Activated B cell treated with CpG ODN at 0.5 μM for 24 hours (primary cell): ENCODE measurements at regions of chr9 and their contacts with region 1.

Region 1: GRCh38 chr9:136728080-136728547 is 14.6 kb downstream of the LCN10 start:
- DNase-seq: peak; percentile 97
- ATAC-seq: peak; percentile 80
- H3K4me3 Mint-ChIP-seq: peak overlapping the region; percentile 95
- H3K27ac Mint-ChIP-seq: peak overlapping the region; percentile 66
- H3K4me1 Mint-ChIP-seq: peaks cover 39% of the 10 kb centered on the region
- H3K27me3 Mint-ChIP-seq: no peaks in the 10 kb centered on the region
- CTCF ChIP-seq: peak; percentile 51

Region 2: GRCh38 chr9:136539427-136540421 is 188.4 kb before region 1 on chr9:
- CTCF ChIA-PET with region 1: no interaction called
- POLR2A ChIA-PET with region 1: interaction called, 13 read pairs
- intact Hi-C with region 1: no loop called
- DNase-seq: peak; percentile 66
- ATAC-seq: peak; percentile 72
- H3K4me3 Mint-ChIP-seq: peak overlapping the region; percentile 76
- H3K27ac Mint-ChIP-seq: peak overlapping the region; percentile 91
- H3K4me1 Mint-ChIP-seq: peaks cover 71% of the 10 kb centered on the region
- H3K27me3 Mint-ChIP-seq: no peaks in the 10 kb centered on the region
- CTCF ChIP-seq: no peak

Region 3: GRCh38 chr9:136695955-136696354 is 32.2 kb before region 1 on chr9:
- CTCF ChIA-PET with region 1: interaction called, 3 read pairs
- POLR2A ChIA-PET with region 1: interaction called, 52 read pairs
- intact Hi-C with region 1: loop called (anchors 1 kb)
- DNase-seq: no peak
- ATAC-seq: no peak
- H3K4me3 Mint-ChIP-seq: no peak overlapping the region
- H3K27ac Mint-ChIP-seq: no peak overlapping the region
- H3K4me1 Mint-ChIP-seq: peaks cover 25% of the 10 kb centered on the region
- H3K27me3 Mint-ChIP-seq: peaks cover 21% of the 10 kb centered on the region
- CTCF ChIP-seq: no peak

Region 4: GRCh38 chr9:136711751-136712689 is 16.1 kb before region 1 on chr9 and contains the start of gene DIPK1B:
- CTCF ChIA-PET with region 1: no interaction called
- POLR2A ChIA-PET with region 1: interaction called, 68 read pairs
- intact Hi-C with region 1: no loop called
- DNase-seq: no peak
- ATAC-seq: peak; percentile 53
- H3K4me3 Mint-ChIP-seq: peak within 1 kb of the TSS; percentile 69
- H3K27ac Mint-ChIP-seq: no peak within 1 kb of the TSS
- H3K4me1 Mint-ChIP-seq: peaks cover 24% of the 10 kb centered on the region
- H3K27me3 Mint-ChIP-seq: peaks cover 14% of the 10 kb centered on the region
- CTCF ChIP-seq: no peak
- total RNA-seq, gene DIPK1B: 1.5 and 2.2 TPM in 2 replicates

Region 5: DNA sequence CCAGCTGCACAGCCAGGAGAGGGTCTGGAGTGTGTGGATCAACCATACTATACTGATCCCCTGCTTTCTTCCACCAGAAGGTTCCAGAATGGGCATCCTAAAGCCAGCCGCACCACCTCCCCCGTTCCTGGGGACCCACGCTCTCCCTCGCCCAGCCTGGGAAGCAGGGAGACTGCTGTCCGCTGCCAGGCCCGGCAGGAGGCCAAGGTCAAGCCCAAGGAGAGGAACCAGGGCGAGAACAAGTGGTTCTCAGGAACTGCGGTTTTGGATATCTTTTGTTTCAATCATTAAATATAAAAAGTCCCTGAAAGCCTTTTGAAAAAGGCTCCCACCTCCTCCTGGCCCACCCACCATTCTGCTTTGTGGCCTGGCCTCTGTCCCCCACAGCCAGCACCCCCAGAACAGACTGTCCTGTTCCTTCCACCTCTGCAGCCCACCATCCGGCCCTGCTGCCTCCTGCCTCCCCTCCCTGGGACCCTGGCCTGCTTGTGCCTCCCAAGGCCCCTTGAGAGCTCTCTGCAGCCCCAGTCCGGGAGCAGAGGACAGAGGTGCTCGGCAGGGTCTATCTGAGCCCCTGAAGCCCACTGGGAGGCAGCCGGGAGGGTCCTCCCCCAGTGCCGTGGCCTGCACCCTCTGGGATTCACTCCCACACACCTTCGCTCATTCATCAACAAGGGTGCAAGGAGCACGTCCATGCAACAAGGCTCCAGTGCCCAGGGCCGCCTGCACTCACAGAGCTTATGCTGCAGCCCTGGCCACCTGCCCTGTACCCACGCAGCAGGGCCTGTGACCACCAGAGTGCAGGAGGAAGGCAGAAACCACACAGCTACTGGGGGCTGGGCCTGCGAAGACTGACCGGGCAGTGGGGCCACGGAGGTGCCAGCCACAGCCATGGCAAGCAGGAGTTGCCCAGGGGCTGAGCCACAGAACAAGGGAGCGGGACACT is 20.8 kb after region 1 on chr9:
- CTCF ChIA-PET with region 1: interaction called, 4 read pairs
- POLR2A ChIA-PET with region 1: interaction called, 112 read pairs
- intact Hi-C with region 1: loop called (anchors 1 kb)
- DNase-seq: no peak
- ATAC-seq: peak; percentile 14
- H3K4me3 Mint-ChIP-seq: peak overlapping the region; percentile 44
- H3K27ac Mint-ChIP-seq: peak overlapping the region; percentile 91
- H3K4me1 Mint-ChIP-seq: peaks cover 46% of the 10 kb centered on the region
- H3K27me3 Mint-ChIP-seq: no peaks in the 10 kb centered on the region
- CTCF ChIP-seq: no peak

Region 6: DNA sequence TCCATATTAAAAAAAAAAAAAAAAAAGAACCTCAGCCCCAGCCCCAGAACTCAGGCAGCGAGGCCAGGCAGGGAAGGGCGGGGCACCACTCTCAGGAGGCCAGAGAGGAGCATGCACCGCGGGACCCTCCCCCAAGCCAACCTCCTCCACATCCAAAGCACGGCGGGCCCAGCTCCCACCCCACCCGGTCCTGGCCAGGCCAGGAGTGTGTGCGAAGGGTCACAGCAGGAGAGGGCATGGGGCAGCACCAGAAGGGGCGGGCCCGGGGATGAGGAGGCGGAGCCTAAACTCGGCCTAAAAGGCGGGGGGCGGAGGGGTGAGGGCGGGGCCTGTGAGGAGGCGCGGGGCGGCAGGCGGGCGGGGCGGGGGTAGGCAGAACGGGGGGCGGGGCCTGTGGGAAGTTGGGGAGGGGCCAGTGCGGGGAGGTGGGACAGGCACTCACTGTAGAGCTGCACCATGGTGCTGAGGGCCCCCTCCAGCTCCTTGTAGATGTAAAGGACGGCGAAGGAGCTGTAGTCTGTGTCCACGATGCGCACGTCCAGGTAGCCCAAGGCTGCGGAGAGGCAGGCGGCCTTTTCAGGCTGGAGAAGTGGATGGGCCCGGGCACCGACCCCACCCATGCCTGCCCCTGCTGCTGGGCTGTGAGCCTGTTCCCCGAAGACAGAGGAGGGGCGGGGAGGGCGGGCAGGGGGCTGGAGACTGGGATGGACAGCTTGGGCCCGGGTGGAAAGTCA is 35.0 kb after region 1 on chr9:
- CTCF ChIA-PET with region 1: interaction called, 22 read pairs
- POLR2A ChIA-PET with region 1: interaction called, 132 read pairs
- intact Hi-C with region 1: no loop called
- DNase-seq: no peak
- ATAC-seq: peak; percentile 16
- H3K4me3 Mint-ChIP-seq: peak overlapping the region; percentile 4
- H3K27ac Mint-ChIP-seq: no peak overlapping the region
- H3K4me1 Mint-ChIP-seq: peaks cover 64% of the 10 kb centered on the region
- H3K27me3 Mint-ChIP-seq: no peaks in the 10 kb centered on the region
- CTCF ChIP-seq: no peak

Region 7: DNA sequence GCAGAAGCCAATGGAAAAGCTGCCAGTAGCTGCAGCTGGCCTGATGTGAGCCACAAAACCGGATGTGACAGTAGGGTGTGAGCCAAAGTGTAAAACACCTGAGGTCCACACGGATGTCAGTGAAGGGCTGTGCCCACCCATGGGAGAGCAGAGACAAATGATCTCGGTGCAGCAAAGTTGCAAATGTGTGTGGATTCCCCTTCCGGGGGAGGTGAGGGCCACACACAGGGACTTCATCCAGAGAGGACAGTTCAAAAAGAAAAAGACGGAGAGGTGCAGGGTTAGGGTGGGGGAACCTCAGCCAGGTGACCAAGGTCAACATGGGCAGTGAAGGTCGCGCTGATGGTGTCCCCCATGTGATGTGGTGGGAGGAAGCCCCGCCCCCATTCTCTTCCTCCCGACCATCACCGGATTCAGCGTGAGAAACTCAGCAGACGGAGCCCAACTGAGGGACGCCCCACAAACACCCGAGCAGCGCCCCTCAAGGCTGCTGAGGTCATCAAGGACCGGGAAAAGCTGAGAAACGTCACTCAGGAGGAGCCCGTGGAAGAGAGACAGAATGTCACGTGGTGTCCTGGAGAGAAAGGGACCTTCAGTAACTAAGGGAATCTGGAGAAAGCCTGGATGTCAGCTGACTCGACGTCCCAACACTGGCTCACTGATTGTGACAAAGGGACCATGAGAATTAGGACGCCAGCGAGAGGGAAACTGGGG is 237.8 kb after region 1 on chr9:
- CTCF ChIA-PET with region 1: no interaction called
- POLR2A ChIA-PET with region 1: no interaction called
- intact Hi-C with region 1: no loop called
- DNase-seq: no peak
- ATAC-seq: peak; percentile 37
- H3K4me3 Mint-ChIP-seq: peak overlapping the region; percentile 64
- H3K27ac Mint-ChIP-seq: no peak overlapping the region
- H3K4me1 Mint-ChIP-seq: peaks cover 9% of the 10 kb centered on the region
- H3K27me3 Mint-ChIP-seq: peaks cover 11% of the 10 kb centered on the region
- CTCF ChIP-seq: no peak

Region 8: DNA sequence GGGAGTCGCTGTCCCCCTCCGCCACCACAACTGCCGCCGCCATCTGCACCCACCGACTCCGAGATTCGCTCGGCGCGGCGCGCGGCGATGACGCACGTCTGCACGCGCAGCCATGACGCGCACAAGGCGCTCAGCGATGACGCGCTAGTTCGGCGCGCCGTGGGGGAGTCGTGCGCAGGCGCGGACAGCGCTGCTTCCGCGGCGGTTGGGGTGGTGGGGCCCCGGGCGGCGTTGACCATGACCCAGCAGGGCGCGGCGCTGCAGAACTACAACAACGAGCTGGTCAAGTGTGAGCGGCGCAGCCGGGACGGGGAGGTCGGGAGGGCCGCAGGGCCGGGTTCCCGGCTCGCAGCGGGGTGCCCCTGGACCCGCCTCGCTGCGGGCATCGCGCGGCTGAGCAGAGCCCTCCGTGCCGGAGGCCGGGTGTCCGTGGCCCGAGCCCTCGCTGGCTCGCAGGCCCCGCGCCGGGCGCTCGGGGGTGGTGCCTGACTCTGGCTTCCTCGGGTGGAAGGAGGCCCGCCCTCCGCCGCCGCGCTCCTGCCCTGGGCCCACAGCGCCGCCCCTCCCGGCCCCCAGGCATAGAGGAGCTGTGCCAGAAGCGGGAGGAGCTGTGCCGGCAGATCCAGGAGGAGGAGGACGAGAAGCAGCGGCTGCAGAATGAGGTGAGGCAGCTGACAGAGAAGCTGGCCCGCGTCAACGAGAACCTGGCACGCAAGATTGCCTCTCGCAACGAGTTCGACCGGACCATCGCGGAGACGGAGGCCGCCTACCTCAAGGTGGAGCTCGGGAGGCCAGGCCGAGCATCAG is 460.6 kb after region 1 on chr9 and contains the starts of genes ANAPC2 and SSNA1:
- CTCF ChIA-PET with region 1: no interaction called
- POLR2A ChIA-PET with region 1: interaction called, 12 read pairs
- intact Hi-C with region 1: no loop called
- DNase-seq: peak; percentile 99
- ATAC-seq: peak; percentile 79
- H3K4me3 Mint-ChIP-seq: peak within 1 kb of the TSS; percentile 92
- H3K27ac Mint-ChIP-seq: peak within 1 kb of the TSS; percentile 91
- H3K4me1 Mint-ChIP-seq: peaks cover 36% of the 10 kb centered on the region
- H3K27me3 Mint-ChIP-seq: no peaks in the 10 kb centered on the region
- CTCF ChIP-seq: no peak
- total RNA-seq, gene ANAPC2: 75.7 and 93.9 TPM in 2 replicates
- total RNA-seq, gene SSNA1: 71.9 and 76.8 TPM in 2 replicates